ENCODE measurements at regions of chr3 and their contacts with region 1.

Region 1: GRCh38 chr3:10732292-10732691 is 83.7 kb upstream of the SLC6A11 start:
- DNase-seq: no peak
- H3K4me3 ChIP-seq: no peak overlapping the region
- H3K27ac ChIP-seq: no peak overlapping the region
- H3K4me1 ChIP-seq: no peaks in the 10 kb centered on the region
- H3K27me3 ChIP-seq: no peaks in the 10 kb centered on the region
- CTCF ChIP-seq: no peak
- EP300 ChIP-seq: no peak
- POLR2A ChIP-seq: no peak

Region 2: DNA sequence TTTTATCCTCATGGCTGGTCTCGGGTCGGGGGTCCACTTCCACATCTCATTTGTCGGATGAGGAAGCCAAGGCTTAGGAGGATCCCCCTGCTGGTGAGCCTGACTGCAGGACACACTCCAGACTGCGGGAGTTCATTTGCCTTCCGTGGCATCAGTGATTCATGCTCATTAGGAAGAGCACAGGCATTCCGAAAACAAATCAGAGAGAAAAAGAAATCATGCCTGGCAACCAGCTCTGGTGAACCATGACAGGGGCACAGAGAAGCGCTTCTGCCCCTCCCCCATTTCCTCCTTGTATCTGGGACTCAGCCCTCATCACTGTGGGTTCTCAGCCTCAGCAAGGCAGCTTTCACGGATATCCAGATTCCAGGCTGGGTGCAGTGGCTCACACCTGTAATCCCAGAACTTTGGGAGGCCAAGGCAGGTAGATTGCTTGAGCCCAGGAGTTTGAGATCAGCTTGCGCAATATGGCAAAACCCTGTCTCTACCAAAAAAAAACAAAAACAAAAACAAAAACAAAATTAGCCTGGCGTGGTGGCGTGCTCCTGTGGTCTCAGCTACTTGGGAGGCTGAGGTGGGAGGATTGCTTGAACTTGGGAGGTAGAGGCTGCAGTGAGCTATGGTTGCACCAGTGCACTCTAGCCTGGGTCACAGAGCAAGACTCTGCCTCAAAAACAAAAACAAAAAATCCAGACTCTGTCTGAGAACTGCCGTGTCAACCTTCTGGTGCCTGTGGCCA is 539.2 kb before region 1 on chr3:
- intact Hi-C with region 1: loop called in 1 of 4 experiments (anchors 5 kb)
- DNase-seq: peak in 1 of 5 donors; percentile 31
- H3K4me3 ChIP-seq: no peak overlapping the region
- H3K27ac ChIP-seq: peak overlapping the region in 1 of 2 donors; percentile 53
- H3K4me1 ChIP-seq: peaks cover 16% of the 10 kb centered on the region
- H3K27me3 ChIP-seq: no peaks in the 10 kb centered on the region
- CTCF ChIP-seq: no peak
- EP300 ChIP-seq: no peak
- POLR2A ChIP-seq: no peak

Region 3: DNA sequence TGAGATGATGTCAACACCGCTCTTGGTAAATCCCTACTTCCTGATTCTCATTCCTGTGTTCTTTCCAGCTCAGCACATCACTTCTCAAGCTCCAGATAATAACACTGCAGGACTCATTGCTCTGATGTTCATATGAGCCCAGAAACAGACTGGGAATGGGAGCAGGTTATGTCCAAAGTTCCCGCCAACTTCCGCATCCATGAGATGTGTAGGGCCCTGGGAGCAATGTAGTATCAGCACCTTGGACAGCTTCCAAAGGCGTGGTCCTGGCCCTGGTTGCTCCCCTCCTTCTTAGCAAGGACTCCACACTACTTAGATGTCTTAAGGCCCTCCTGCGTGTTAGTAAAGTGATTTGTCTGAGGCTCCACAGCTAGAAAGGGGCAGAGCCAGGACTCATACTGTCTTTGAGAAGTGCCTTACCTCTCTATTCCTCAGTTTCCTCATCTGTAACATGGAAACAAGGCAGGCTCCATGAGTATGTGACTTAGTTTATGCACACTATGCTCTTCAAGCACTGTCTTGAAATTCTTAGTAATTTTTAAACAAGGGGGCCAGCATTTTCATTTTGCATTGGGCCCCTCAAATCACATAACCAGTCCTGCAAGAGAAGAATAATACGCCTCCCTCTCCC is 232.4 kb after region 1 on chr3:
- intact Hi-C with region 1: no loop called
- DNase-seq: no peak
- H3K4me3 ChIP-seq: no peak overlapping the region
- H3K27ac ChIP-seq: no peak overlapping the region
- H3K4me1 ChIP-seq: no peaks in the 10 kb centered on the region
- H3K27me3 ChIP-seq: no peaks in the 10 kb centered on the region
- CTCF ChIP-seq: no peak
- EP300 ChIP-seq: no peak
- POLR2A ChIP-seq: no peak

Measured in ovary (tissue), 10 donors.